Cardiac septum (tissue), 1 donor: ENCODE measurements at regions of chr11 and their contacts with region 1.

Region 1: GRCh38 chr11:122344274-122344673 is 228.3 kb upstream of the BLID start:
- DNase-seq: no peak

Region 2: GRCh38 chr11:122146475-122146874 is 197.8 kb before region 1 on chr11:
- intact Hi-C with region 1: no loop called
- DNase-seq: no peak

Region 3: GRCh38 chr11:122215244-122215992 is 128.9 kb before region 1 on chr11:
- intact Hi-C with region 1: loop called (anchors 10 kb)
- DNase-seq: peak; percentile 86

Region 4: DNA sequence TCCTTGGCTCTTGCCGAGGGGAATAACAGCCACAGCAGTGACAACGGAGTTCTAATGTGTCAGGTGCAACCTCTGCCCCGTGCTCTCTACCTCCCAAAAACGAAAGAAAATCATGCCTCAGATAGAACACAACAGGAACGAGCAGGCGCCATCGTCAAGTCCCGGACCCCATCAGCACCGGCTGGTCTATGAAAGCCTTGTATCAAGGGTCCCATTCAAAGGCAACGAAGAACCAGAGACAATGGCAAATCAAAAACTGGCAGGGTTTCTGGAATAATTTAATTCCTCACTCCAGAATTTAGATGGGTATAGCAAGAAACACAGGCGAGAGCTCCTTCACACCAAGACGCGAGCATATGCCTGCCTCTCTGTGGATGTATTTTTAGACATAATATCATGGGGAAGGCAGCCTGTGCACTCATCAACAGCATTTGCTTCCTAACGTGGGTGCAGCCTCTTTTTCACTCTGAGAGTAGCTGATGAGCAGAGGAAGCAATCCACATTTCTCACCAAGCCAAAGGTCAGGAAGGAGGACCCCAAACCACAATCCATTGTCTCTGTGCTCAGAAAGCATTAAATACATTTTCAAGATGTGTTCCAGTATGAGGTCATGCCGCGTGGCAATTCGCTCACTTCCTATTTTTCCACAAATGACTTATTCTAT is 34.9 kb before region 1 on chr11:
- intact Hi-C with region 1: loop called (anchors 5 kb)
- DNase-seq: no peak

Region 5: GRCh38 chr11:122367809-122368231 is 23.5 kb after region 1 on chr11:
- intact Hi-C with region 1: no loop called
- DNase-seq: no peak

Region 6: DNA sequence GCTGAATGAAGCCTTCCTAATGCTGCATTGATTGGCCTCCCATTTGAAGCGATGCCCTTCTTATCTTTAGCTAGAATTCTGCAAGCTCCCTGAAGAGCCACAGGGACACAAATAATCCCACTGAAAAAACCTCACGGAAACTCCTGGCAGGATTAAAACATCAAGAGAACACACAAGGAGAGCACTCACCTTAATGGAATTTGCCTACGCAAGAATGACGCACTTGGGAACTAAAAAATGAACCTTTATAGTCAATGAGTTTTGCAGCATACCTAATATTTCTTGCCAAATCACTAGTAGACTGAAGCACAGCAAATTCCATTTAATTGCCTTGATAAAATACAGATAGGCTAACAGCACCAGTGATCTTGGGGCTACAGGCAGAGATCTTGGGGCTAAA is 78.4 kb after region 1 on chr11:
- intact Hi-C with region 1: no loop called
- DNase-seq: no peak

Region 7: DNA sequence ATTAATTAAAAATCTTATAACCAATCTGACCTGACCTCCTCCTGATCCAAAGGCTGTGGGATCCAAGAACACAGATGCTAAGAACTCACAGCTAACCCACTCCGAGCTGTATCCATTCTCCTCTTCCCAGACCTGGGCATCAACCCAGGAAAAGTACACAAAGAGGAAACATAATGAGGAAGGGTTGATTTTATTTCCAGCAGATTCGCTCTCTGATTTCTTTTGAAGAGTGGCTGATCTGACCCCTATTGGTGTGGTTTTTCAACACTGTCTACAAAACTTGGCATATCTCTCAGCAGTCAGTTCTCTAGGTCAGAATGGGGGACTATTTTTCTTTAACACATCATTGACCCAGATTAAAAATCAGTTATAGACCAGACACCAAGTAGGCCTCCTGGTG is 109.3 kb after region 1 on chr11:
- intact Hi-C with region 1: no loop called
- DNase-seq: no peak